Natural killer cell (primary cell): ENCODE measurements at regions of chr7 and their contacts with region 1.

Region 1: DNA sequence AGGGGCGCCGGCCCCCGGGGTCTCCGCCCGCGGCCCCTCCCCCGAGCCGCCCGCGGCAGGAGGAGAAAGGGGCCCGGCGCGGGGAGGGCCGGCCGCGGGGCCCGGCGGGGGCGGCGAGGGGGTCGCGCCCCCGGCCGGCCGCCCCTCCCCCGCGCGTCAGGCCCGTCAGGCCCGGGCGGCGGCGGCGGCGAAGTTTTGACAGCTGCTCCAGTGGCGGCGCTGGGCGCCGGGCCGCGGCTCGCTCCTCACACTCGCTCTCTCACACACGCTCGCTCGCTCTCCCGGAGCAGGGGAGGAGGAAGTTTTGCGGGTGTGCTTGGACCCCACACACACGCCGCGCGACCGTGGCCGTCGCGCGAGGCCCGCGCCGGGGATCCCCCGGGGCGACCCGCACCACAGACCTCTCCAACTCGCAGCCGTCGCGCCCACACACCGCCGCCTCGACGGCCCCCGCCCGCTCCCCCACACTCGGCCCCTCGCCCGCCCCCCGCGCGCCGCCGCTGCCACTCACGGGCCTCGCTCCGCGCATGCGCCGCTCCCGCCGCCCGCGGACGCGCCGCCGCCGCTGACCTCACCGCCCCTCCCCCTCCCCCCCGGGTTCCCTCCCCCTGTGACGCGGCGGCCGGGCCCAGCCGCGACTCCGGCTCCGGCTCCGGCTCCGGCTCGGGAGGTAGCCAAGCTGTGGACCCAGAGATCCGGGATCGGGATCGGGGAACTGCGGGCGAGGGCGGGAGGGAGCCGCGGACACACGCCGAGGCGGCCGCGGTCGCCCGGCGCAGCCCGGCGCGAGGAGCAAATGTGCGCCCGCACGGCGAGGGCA is 518 bp upstream of the KMT2C start:
- DNase-seq: peak; percentile 89 to 96
- ATAC-seq: peak; percentile 73 to 89 (median 79)
- H3K4me3 ChIP-seq: peak overlapping the region; percentile 66
- H3K4me3 Mint-ChIP-seq: peak overlapping the region; percentile 91
- H3K27ac ChIP-seq: peak overlapping the region; percentile 91
- H3K27ac Mint-ChIP-seq: peak overlapping the region; percentile 89 to 90
- H3K4me1 ChIP-seq: peaks cover 5% of the 10 kb centered on the region
- H3K4me1 Mint-ChIP-seq: peaks cover 25 to 27% of the 10 kb centered on the region in 2 donors
- H3K27me3 ChIP-seq: no peaks in the 10 kb centered on the region
- H3K27me3 Mint-ChIP-seq: no peaks in the 10 kb centered on the region
- CTCF ChIP-seq: no peak

Region 2: GRCh38 chr7:152292898-152293297 is 143.4 kb before region 1 on chr7:
- intact Hi-C with region 1: no loop called
- DNase-seq: no peak
- ATAC-seq: no peak
- H3K4me3 ChIP-seq: no peak overlapping the region
- H3K4me3 Mint-ChIP-seq: no peak overlapping the region
- H3K27ac ChIP-seq: no peak overlapping the region
- H3K27ac Mint-ChIP-seq: peak overlapping the region in 1 of 2 donors; percentile 28
- H3K4me1 ChIP-seq: no peaks in the 10 kb centered on the region
- H3K4me1 Mint-ChIP-seq: peaks cover 20 to 22% of the 10 kb centered on the region in 2 donors
- H3K27me3 ChIP-seq: no peaks in the 10 kb centered on the region
- H3K27me3 Mint-ChIP-seq: no peaks in the 10 kb centered on the region
- CTCF ChIP-seq: no peak

Region 3: DNA sequence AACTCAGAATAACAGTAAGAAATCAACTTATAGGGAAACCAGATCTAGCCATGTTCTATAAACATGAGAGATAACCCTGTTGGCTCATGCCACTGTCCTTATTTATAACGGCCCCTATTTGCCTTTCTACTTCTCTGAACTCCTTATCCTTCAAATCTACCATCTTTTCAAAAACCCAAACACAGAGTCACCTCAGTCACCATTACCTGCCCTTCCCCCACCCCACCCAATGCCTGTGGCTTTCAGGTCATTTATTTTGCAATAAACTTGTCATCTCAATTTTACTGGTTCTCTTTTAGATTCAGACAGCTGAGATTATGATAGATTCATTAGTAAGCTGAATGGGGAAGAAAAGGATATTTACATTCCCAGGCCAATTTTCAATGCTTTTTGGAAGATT is 54.1 kb before region 1 on chr7:
- intact Hi-C with region 1: no loop called
- DNase-seq: no peak
- ATAC-seq: no peak
- H3K4me3 ChIP-seq: no peak overlapping the region
- H3K4me3 Mint-ChIP-seq: no peak overlapping the region
- H3K27ac ChIP-seq: no peak overlapping the region
- H3K27ac Mint-ChIP-seq: no peak overlapping the region
- H3K4me1 ChIP-seq: no peaks in the 10 kb centered on the region
- H3K4me1 Mint-ChIP-seq: peaks cover 36 to 41% of the 10 kb centered on the region in 2 donors
- H3K27me3 ChIP-seq: no peaks in the 10 kb centered on the region
- H3K27me3 Mint-ChIP-seq: no peaks in the 10 kb centered on the region
- CTCF ChIP-seq: no peak

Region 4: GRCh38 chr7:152424348-152425108 is 11.8 kb before region 1 on chr7:
- intact Hi-C with region 1: no loop called
- DNase-seq: no peak
- ATAC-seq: peak in 2 of 3 donors; percentile 32 to 66
- H3K4me3 ChIP-seq: no peak overlapping the region
- H3K4me3 Mint-ChIP-seq: no peak overlapping the region
- H3K27ac ChIP-seq: no peak overlapping the region
- H3K27ac Mint-ChIP-seq: peak overlapping the region in 1 of 2 donors; percentile 27
- H3K4me1 ChIP-seq: peaks cover 10% of the 10 kb centered on the region
- H3K4me1 Mint-ChIP-seq: peaks cover 65 to 75% of the 10 kb centered on the region in 2 donors
- H3K27me3 ChIP-seq: no peaks in the 10 kb centered on the region
- H3K27me3 Mint-ChIP-seq: no peaks in the 10 kb centered on the region
- CTCF ChIP-seq: no peak

Region 5: GRCh38 chr7:152463709-152464311 is 27.5 kb after region 1 on chr7:
- intact Hi-C with region 1: loop called (anchors 1 kb)
- DNase-seq: peak; percentile 100
- ATAC-seq: peak; percentile 88 to 97 (median 90)
- H3K4me3 ChIP-seq: peak overlapping the region; percentile 90
- H3K4me3 Mint-ChIP-seq: peak overlapping the region; percentile 93
- H3K27ac ChIP-seq: peak overlapping the region; percentile 92
- H3K27ac Mint-ChIP-seq: peak overlapping the region; percentile 88 to 91
- H3K4me1 ChIP-seq: peaks cover 21% of the 10 kb centered on the region
- H3K4me1 Mint-ChIP-seq: peaks cover 7 to 21% of the 10 kb centered on the region in 2 donors
- H3K27me3 ChIP-seq: no peaks in the 10 kb centered on the region
- H3K27me3 Mint-ChIP-seq: no peaks in the 10 kb centered on the region
- CTCF ChIP-seq: no peak